B cell (primary cell): ENCODE measurements at regions of chr5 and their contacts with region 1.

Region 1: DNA sequence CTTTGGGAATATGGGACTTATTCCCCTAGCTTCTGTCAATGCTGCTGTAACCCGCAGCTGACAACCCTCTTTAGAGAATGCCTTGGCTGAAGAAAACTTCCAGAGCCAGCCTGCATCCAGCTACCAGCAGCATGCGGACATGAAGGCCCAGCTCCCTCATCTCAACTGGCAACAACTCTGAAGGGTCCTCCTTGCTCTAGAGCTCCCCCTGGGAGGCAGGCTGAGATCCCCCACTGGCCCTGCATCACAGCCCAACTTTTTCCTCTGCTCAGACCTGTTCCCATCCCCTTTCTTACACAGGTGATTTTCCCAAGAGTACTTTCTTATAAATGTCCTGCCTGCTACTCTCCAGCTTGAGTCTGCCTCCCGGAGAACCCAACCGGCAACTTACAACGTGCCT is 18.7 kb upstream of the WNT8A start:
- DNase-seq: no peak
- ATAC-seq: no peak
- H3K4me3 ChIP-seq: no peak overlapping the region
- H3K4me3 Mint-ChIP-seq: no peak overlapping the region
- H3K27ac ChIP-seq: no peak overlapping the region
- H3K27ac Mint-ChIP-seq: no peak overlapping the region
- H3K4me1 ChIP-seq: no peaks in the 10 kb centered on the region
- H3K4me1 Mint-ChIP-seq: peaks cover 4% of the 10 kb centered on the region
- H3K27me3 ChIP-seq: no peaks in the 10 kb centered on the region
- H3K27me3 Mint-ChIP-seq: no peaks in the 10 kb centered on the region
- CTCF ChIP-seq: no peak

Region 2: DNA sequence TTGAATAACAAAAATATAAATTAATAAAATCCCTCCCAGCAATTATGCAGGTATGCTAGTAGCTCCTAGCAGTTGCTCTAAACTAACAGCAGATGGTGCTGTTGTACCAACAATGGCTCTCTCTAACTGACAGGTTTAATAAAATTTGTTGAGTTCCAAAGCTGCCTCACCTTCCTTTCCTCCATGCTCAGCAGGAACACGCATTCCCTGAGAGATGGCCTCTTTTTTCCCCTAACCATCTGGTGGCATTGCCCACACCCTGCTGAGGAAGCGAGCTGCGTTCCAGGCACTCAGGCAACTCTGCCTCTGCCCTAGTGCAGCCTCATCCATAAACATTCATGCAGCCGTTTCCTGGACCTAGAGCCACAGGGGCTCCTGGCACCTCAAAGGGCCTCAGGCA is 435.5 kb before region 1 on chr5:
- CTCF ChIA-PET with region 1: interaction called, 26 read pairs
- POLR2A ChIA-PET with region 1: no interaction called
- intact Hi-C with region 1: no loop called
- DNase-seq: peak; percentile 58
- ATAC-seq: peak; percentile 51
- H3K4me3 ChIP-seq: no peak overlapping the region
- H3K4me3 Mint-ChIP-seq: no peak overlapping the region
- H3K27ac ChIP-seq: no peak overlapping the region
- H3K27ac Mint-ChIP-seq: no peak overlapping the region
- H3K4me1 ChIP-seq: no peaks in the 10 kb centered on the region
- H3K4me1 Mint-ChIP-seq: no peaks in the 10 kb centered on the region
- H3K27me3 ChIP-seq: no peaks in the 10 kb centered on the region
- H3K27me3 Mint-ChIP-seq: no peaks in the 10 kb centered on the region
- CTCF ChIP-seq: peak; percentile 95

Region 3: GRCh38 chr5:138024117-138024516 is 41.0 kb before region 1 on chr5:
- CTCF ChIA-PET with region 1: interaction called, 12 read pairs
- POLR2A ChIA-PET with region 1: no interaction called
- intact Hi-C with region 1: no loop called
- DNase-seq: no peak
- ATAC-seq: no peak
- H3K4me3 ChIP-seq: no peak overlapping the region
- H3K4me3 Mint-ChIP-seq: no peak overlapping the region
- H3K27ac ChIP-seq: no peak overlapping the region
- H3K27ac Mint-ChIP-seq: no peak overlapping the region
- H3K4me1 ChIP-seq: peaks cover 46 to 62% of the 10 kb centered on the region in 2 donors
- H3K4me1 Mint-ChIP-seq: peaks cover 74% of the 10 kb centered on the region
- H3K27me3 ChIP-seq: no peaks in the 10 kb centered on the region
- H3K27me3 Mint-ChIP-seq: no peaks in the 10 kb centered on the region
- CTCF ChIP-seq: no peak

Region 4: DNA sequence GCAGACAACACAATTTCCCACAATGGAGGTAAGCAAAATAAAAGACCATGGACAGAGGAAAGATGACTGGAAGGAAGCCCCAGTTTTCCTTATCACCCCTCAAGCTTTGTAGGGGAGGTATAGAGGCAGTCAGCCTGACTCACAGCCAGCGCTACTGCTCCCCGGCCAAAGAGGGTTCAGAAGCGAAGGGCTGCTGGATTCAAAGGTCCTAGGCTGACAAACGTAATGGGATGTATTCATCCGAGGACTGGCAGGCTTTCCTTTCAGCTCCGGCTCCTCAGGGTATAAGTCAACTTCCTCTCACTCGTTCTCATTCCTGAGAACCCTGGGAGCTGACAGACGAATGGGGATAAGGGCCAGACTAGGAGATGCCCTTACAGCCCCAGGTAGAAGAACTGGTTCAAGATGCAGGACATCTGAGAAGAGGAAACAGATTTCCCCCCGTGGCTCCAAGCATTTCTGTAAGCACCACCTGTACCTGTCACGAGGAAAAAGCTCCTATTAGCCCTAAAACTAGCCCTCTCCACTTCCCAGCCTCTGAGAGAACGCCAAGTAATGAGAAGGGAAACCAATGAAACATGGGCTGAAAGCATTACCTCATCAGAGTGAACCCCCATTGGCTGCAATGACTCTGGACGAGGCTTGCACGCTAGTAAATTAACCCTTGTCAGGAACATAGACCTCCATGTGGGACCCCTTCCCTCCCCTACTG is 10.1 kb before region 1 on chr5:
- CTCF ChIA-PET with region 1: interaction called, 14 read pairs
- POLR2A ChIA-PET with region 1: no interaction called
- intact Hi-C with region 1: no loop called
- DNase-seq: no peak
- ATAC-seq: no peak
- H3K4me3 ChIP-seq: no peak overlapping the region
- H3K4me3 Mint-ChIP-seq: no peak overlapping the region
- H3K27ac ChIP-seq: no peak overlapping the region
- H3K27ac Mint-ChIP-seq: no peak overlapping the region
- H3K4me1 ChIP-seq: no peaks in the 10 kb centered on the region
- H3K4me1 Mint-ChIP-seq: no peaks in the 10 kb centered on the region
- H3K27me3 ChIP-seq: no peaks in the 10 kb centered on the region
- H3K27me3 Mint-ChIP-seq: no peaks in the 10 kb centered on the region
- CTCF ChIP-seq: no peak

Region 5: DNA sequence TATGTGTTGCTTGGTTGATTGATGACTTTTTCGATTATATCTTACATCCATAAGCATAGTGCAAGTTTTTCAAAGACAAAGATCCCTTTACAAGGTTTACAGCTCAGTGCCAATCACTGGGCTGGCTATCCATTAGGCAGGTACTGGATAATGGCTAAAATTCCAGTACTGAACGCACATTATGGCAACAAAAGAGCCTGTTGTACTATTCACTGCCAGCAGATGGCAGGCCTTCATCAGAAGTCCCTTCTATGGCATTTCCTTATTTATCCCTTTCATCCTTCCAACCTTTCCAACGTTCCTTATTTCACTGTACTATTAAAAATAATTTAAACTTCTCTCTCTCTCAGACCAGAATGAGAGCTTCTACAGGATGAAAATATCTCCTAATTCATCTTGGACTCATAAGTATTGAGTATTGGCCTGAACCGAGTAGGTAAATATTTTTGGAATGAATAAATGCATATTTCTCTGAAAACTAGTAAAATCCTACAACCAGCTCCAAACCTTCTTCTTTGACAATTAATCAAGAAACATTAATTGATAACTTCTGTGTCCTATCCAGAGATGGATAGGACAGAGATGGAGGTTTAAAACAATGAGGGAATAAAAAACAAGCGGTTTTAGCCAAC is 12.1 kb after region 1 on chr5:
- CTCF ChIA-PET with region 1: interaction called, 20 read pairs
- POLR2A ChIA-PET with region 1: no interaction called
- intact Hi-C with region 1: no loop called
- DNase-seq: peak; percentile 71
- ATAC-seq: peak; percentile 53
- H3K4me3 ChIP-seq: no peak overlapping the region
- H3K4me3 Mint-ChIP-seq: no peak overlapping the region
- H3K27ac ChIP-seq: no peak overlapping the region
- H3K27ac Mint-ChIP-seq: no peak overlapping the region
- H3K4me1 ChIP-seq: peaks cover 3 to 15% of the 10 kb centered on the region in 2 donors
- H3K4me1 Mint-ChIP-seq: peaks cover 10% of the 10 kb centered on the region
- H3K27me3 ChIP-seq: no peaks in the 10 kb centered on the region
- H3K27me3 Mint-ChIP-seq: no peaks in the 10 kb centered on the region
- CTCF ChIP-seq: peak; percentile 99

Region 6: DNA sequence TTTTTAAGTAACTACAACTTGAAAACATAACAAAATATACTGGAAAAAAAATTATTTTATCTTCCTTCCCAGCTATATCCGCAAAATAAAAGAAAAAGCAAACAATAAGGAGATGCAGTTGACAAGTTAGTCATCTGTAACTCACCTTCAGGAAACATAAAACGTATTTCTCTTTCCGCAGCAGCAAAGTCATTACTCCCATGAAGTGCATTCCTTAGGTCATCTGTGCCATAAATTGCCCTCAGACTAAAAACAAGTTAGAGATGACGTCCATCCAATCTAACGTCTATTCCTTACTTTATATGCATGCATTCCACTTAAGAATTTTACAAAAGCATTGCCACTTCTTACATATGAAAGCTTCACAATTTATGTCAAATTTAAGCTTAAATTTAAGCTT is 63.2 kb after region 1 on chr5:
- CTCF ChIA-PET with region 1: interaction called, 25 read pairs
- POLR2A ChIA-PET with region 1: no interaction called
- intact Hi-C with region 1: no loop called
- DNase-seq: no peak
- ATAC-seq: no peak
- H3K4me3 ChIP-seq: no peak overlapping the region
- H3K4me3 Mint-ChIP-seq: no peak overlapping the region
- H3K27ac ChIP-seq: no peak overlapping the region
- H3K27ac Mint-ChIP-seq: no peak overlapping the region
- H3K4me1 ChIP-seq: peaks cover 0 to 4% of the 10 kb centered on the region in 2 donors
- H3K4me1 Mint-ChIP-seq: peaks cover 1% of the 10 kb centered on the region
- H3K27me3 ChIP-seq: peaks cover 0 to 7% (median 0%) of the 10 kb centered on the region in 4 experiments
- H3K27me3 Mint-ChIP-seq: peaks cover 17% of the 10 kb centered on the region
- CTCF ChIP-seq: no peak

Region 7: GRCh38 chr5:138425079-138425478 is 360.0 kb after region 1 on chr5:
- CTCF ChIA-PET with region 1: no interaction called
- POLR2A ChIA-PET with region 1: no interaction called
- intact Hi-C with region 1: no loop called
- DNase-seq: no peak
- ATAC-seq: no peak
- H3K4me3 ChIP-seq: no peak overlapping the region
- H3K4me3 Mint-ChIP-seq: no peak overlapping the region
- H3K27ac ChIP-seq: no peak overlapping the region
- H3K27ac Mint-ChIP-seq: peak overlapping the region; percentile 10
- H3K4me1 ChIP-seq: no peaks in the 10 kb centered on the region
- H3K4me1 Mint-ChIP-seq: no peaks in the 10 kb centered on the region
- H3K27me3 ChIP-seq: no peaks in the 10 kb centered on the region
- H3K27me3 Mint-ChIP-seq: no peaks in the 10 kb centered on the region
- CTCF ChIP-seq: no peak